ENCODE measurements at regions of chr10 and their contacts with region 1.

Region 1: DNA sequence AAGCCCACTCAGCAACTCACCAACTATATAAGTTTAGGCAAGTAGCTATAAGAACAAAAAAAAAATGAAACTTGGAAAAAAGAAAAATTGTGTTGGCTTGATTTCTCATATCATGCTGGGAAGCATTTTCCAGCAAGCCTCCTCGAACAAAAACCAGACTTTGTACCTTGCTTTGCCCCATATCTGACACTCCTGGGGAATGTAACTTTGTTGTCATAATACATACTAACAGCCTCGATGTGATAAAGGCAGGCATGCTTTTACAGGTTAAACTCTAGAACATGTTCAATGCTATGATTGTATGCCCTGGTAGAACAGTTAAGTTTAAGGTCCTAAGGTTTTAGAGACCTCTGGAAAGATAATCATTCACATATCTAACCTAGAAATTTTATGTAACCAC is 11.6 kb downstream of the CFAP43 start:
- DNase-seq: no peak
- ATAC-seq: no peak
- H3K4me3 ChIP-seq: no peak overlapping the region
- H3K27ac ChIP-seq: no peak overlapping the region
- H3K4me1 ChIP-seq: no peaks in the 10 kb centered on the region
- H3K27me3 ChIP-seq: peaks cover 38% of the 10 kb centered on the region
- CTCF ChIP-seq: no peak
- POLR2A ChIP-seq: no peak
- RAD21 ChIP-seq: no peak

Region 2: DNA sequence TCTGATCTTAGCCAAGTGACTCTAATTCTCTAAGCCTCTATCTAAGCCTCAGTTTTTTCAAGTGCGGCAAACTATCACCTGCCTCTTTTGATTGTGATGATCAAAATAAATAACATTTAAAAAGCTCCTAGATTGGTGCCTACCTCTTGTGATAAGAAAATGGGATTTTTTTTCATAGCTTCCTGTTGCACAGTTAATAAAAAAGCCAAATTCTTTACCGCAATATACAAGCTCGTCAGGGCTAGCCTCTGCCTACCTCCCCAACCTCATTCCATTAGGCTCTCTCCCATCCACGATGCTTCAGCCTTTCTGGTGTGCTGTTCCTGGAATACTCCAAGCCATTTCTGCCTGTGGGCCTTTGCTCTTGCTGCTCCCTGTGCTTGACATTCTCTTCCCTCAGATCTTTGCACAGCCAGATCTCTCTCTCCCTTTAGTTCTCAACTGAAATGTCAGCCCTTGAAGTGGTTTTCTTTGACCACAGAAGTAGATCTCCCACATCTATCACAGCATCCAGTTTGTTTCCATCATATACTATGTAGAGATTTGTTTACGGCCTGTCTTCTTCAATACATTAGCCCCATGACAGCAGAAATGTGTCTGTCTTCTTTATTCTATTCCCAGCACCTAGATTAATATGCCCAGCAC is 49.8 kb before region 1 on chr10:
- CTCF ChIA-PET with region 1: no interaction called
- POLR2A ChIA-PET with region 1: no interaction called
- dilution Hi-C with region 1: no loop called
- in situ Hi-C with region 1: no loop called
- intact Hi-C with region 1: loop called (anchors 5 kb)
- DNase-seq: no peak
- ATAC-seq: no peak
- H3K4me3 ChIP-seq: no peak overlapping the region
- H3K27ac ChIP-seq: no peak overlapping the region
- H3K4me1 ChIP-seq: no peaks in the 10 kb centered on the region
- H3K27me3 ChIP-seq: peaks cover 24% of the 10 kb centered on the region
- CTCF ChIP-seq: no peak
- POLR2A ChIP-seq: no peak
- RAD21 ChIP-seq: no peak

Region 3: DNA sequence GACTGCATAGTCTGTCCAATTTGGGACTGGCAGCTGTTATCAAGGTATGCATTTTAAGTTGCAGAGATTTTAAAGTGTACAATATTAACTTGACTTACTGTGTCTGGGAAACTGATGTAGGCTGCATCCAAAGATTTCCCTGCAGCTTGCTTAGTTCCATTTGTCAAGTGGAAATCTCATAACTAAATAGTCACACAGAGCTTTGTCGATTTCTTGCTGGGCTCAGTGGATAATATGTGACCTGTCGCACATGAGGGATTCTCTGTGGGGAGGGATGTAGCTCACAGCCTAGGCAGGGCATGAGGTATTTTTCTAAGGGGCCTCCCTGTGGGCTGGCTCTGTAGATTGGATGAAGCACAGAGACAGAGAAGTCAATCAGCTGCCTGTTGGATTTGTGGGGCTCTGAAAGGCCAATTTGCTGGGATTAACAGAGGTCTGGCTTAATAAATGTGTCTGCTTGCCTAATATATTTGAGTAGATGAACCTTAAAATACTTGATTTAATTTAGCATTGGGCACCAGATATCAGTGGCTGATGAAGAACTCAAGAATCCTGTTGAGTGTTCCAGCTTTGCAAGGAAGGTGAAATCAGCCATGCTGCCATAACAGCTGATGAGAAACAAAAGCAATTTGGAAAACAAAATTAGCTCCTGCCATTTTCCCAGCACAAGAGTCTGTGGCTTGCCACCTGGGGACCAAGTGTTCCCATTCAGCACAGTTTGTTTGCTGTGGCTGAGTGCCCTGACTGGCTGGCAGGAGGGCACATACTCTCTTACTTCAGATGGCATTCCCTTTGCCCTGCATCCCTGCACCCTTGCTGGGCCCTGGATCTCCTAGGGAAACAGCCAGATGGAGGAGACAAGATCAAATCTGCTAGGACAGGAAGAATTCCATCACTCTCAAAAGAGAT is 1019.0 kb after region 1 on chr10:
- CTCF ChIA-PET with region 1: no interaction called
- POLR2A ChIA-PET with region 1: no interaction called
- dilution Hi-C with region 1: no loop called
- in situ Hi-C with region 1: no loop called
- intact Hi-C with region 1: no loop called
- DNase-seq: no peak
- ATAC-seq: no peak
- H3K4me3 ChIP-seq: no peak overlapping the region
- H3K27ac ChIP-seq: no peak overlapping the region
- H3K4me1 ChIP-seq: no peaks in the 10 kb centered on the region
- H3K27me3 ChIP-seq: no peaks in the 10 kb centered on the region
- CTCF ChIP-seq: no peak
- POLR2A ChIP-seq: no peak
- RAD21 ChIP-seq: no peak

Measured in IMR-90 (cell line).